T-cell (primary cell): ENCODE measurements at regions of chr4 and their contacts with region 1.

Region 1: GRCh38 chr4:142725886-142726285 is 120.2 kb downstream of the INPP4B start:
- DNase-seq: no peak
- ATAC-seq: no peak
- H3K4me3 ChIP-seq: no peak overlapping the region
- H3K4me3 Mint-ChIP-seq: no peak overlapping the region
- H3K27ac ChIP-seq: no peak overlapping the region
- H3K27ac Mint-ChIP-seq: no peak overlapping the region
- H3K4me1 ChIP-seq: no peaks in the 10 kb centered on the region
- H3K4me1 Mint-ChIP-seq: peaks cover 5 to 12% (median 8%) of the 10 kb centered on the region in 3 donors
- H3K27me3 ChIP-seq: no peaks in the 10 kb centered on the region
- H3K27me3 Mint-ChIP-seq: no peaks in the 10 kb centered on the region

Region 2: DNA sequence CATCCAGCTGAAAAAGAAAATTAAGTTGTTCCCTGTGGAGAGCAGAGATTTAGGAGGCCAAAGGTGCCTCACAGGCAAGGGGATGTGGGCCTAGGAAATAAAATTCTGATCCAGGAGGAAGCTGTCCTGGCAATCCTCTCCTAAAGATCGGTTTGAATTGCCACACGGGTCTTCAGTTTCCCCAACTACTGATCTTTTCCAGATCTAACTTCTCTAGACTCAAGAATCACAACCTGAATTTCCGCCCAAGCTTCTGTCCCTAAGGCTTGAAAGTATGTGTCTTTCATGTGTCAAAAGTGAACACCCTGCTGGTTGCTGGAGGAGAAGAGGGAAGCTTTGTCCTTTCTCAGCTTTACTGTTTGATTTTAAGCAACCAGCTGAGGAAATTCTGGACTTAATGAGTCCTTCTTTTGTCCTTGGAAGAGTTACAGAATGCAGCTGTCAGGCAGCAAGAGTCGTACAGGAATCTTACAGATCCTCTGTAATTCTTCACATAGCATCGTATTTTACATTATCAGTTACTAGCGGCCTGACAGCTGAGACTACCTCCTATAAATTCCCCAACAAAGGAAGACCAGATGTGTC is 26.4 kb after region 1 on chr4:
- CTCF ChIA-PET with region 1: no interaction called
- POLR2A ChIA-PET with region 1: interaction called in 1 of 2 experiments, 12 read pairs
- DNase-seq: no peak
- ATAC-seq: no peak
- H3K4me3 ChIP-seq: no peak overlapping the region
- H3K4me3 Mint-ChIP-seq: no peak overlapping the region
- H3K27ac ChIP-seq: no peak overlapping the region
- H3K27ac Mint-ChIP-seq: no peak overlapping the region
- H3K4me1 ChIP-seq: no peaks in the 10 kb centered on the region
- H3K4me1 Mint-ChIP-seq: no peaks in the 10 kb centered on the region
- H3K27me3 ChIP-seq: no peaks in the 10 kb centered on the region
- H3K27me3 Mint-ChIP-seq: no peaks in the 10 kb centered on the region